Endothelial cell of umbilical vein (primary cell): ENCODE measurements at regions of chr3 and their contacts with region 1.

Region 1: DNA sequence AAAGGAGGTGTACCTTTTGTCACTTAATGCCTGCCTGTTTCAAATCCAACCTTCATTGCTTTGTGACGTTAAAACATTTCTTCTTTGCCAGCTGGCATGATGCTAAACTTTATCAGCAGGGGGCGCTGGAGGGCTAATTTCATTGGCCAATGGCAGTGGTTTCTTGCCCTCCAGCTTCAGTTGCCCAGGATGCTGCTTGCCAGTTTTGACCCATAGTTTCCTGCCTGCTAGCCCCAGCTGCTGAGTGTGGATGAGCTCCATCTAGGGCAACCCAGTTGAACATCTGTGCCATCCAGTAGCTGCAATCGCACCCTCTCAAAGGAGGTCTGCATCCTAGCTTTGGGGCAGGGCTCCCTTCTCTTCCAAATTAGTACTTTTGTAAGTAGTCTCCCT is 22.1 kb downstream of the ACKR2 start:
- DNase-seq: peak; percentile 52
- H3K4me3 ChIP-seq: no peak overlapping the region
- H3K27ac ChIP-seq: no peak overlapping the region
- H3K4me1 ChIP-seq: no peaks in the 10 kb centered on the region
- H3K27me3 ChIP-seq: peaks cover 6 to 8% of the 10 kb centered on the region in 2 experiments
- CTCF ChIP-seq: peak; percentile 73 to 77
- POLR2A ChIP-seq: no peak

Region 2: GRCh38 chr3:42780892-42781700 is 50.2 kb before region 1 on chr3:
- CTCF ChIA-PET with region 1: interaction called, 4 read pairs
- POLR2A ChIA-PET with region 1: no interaction called
- dilution Hi-C with region 1: no loop called
- intact Hi-C with region 1: loop called (anchors 2 kb)
- DNase-seq: peak; percentile 78
- H3K4me3 ChIP-seq: no peak overlapping the region
- H3K27ac ChIP-seq: no peak overlapping the region
- H3K4me1 ChIP-seq: no peaks in the 10 kb centered on the region
- H3K27me3 ChIP-seq: no peaks in the 10 kb centered on the region
- CTCF ChIP-seq: peak; percentile 56 to 64
- POLR2A ChIP-seq: no peak

Region 3: DNA sequence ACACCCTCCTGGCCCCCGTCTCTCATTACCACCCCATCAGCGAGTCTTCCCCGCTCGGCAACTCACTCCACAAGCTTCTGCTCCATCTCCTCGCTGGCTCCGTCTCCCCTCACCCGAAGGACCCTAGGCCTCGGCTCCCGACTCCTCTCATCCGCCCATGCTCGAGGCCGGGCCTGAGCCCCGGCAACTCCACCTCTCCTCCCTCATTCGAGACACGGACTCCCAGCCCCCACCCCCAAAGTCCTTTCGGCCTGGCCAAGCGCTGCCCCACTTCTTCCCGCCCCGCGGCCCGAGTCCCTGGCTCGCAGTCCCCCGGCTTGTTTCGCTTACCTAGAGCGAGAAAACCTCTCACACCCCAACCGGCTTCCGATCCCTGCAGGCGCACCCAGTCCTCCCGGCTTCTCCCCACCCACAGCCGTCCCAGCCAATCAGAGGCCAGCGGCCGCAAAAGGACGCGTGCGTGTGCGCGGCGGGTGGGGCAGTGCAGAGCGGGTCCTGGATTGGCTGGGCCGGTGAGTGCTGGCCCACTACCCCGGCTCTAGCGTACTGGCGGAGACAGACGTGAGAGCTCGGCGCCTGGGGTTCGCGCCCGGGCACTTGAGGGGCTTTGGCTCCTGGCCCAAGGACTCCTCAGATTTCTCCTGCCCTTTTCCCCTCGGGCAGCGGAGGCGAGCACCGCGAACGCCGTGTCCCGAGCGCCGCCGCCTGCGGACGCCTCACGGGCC is 27.0 kb before region 1 on chr3 and contains the start of gene HIGD1A:
- CTCF ChIA-PET with region 1: interaction called, 24 read pairs
- POLR2A ChIA-PET with region 1: no interaction called
- dilution Hi-C with region 1: no loop called
- intact Hi-C with region 1: no loop called
- DNase-seq: peak; percentile 96
- H3K4me3 ChIP-seq: peak within 1 kb of the TSS; percentile 11 to 77 (median 52)
- H3K27ac ChIP-seq: peak within 1 kb of the TSS; percentile 39
- H3K4me1 ChIP-seq: peaks cover 11% of the 10 kb centered on the region
- H3K27me3 ChIP-seq: peaks cover 2 to 10% of the 10 kb centered on the region in 2 experiments
- CTCF ChIP-seq: no peak
- POLR2A ChIP-seq: peak; percentile 67
- total RNA-seq, gene HIGD1A: 68.9 and 71.8 TPM in 2 replicates

Region 4: DNA sequence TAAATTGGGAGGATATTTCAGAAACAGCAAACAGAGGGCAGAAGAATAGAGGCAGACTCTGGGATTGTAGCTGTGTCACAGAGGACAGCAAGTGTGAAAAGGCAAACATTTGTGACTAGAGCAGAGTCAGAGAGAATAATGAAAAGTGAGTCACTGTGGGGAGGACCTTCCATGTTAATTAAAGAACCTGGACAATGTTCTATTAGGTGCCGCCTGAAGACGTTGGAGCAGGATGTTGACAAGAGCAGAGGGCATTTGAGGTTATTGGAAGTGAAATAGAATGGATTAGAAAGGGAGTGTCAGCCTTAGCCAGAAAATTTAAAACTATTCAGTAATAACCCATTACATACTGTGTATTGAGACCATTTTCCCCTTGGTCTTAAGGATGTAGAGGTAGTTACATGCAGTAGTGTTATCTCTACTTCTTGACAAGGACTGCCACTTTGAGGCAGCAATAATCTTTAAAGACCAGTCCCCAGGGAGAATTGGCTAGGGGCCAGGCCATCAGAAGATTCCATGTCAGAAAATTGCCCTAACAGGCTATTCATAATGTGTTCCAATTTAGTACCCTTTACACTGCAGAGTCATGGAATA is 16.3 kb before region 1 on chr3:
- CTCF ChIA-PET with region 1: interaction called, 10 read pairs
- POLR2A ChIA-PET with region 1: no interaction called
- dilution Hi-C with region 1: no loop called
- intact Hi-C with region 1: no loop called
- DNase-seq: no peak
- H3K4me3 ChIP-seq: no peak overlapping the region
- H3K27ac ChIP-seq: no peak overlapping the region
- H3K4me1 ChIP-seq: no peaks in the 10 kb centered on the region
- H3K27me3 ChIP-seq: peaks cover 13 to 21% of the 10 kb centered on the region in 2 experiments
- CTCF ChIP-seq: no peak
- POLR2A ChIP-seq: no peak

Region 5: GRCh38 chr3:42880601-42881451 is 49.5 kb after region 1 on chr3:
- CTCF ChIA-PET with region 1: interaction called, 21 read pairs
- POLR2A ChIA-PET with region 1: no interaction called
- dilution Hi-C with region 1: no loop called
- intact Hi-C with region 1: loop called (anchors 1 kb)
- DNase-seq: peak; percentile 46
- H3K4me3 ChIP-seq: peak overlapping the region; percentile 23 to 40 (median 38)
- H3K27ac ChIP-seq: no peak overlapping the region
- H3K4me1 ChIP-seq: peaks cover 7% of the 10 kb centered on the region
- H3K27me3 ChIP-seq: peaks cover 11 to 16% of the 10 kb centered on the region in 2 experiments
- CTCF ChIP-seq: peak; percentile 88 to 94
- POLR2A ChIP-seq: no peak